Activated naive CD8-positive, alpha-beta T cell treated with anti-CD3 and anti-CD28 coated beads, Interleukin-2, amount 10 ng/mL, durations not matched to agents 7 days and 5 days (primary cell): ENCODE measurements at regions of chr10 and their contacts with region 1.

Region 1: GRCh38 chr10:89391917-89392756 is at the start of gene IFIT1:
- DNase-seq: no peak
- ATAC-seq: peak; percentile 88
- H3K4me3 Mint-ChIP-seq: peak within 1 kb of the TSS; percentile 86
- H3K27ac Mint-ChIP-seq: peak within 1 kb of the TSS; percentile 88
- H3K4me1 Mint-ChIP-seq: peaks cover 35% of the 10 kb centered on the region
- H3K27me3 Mint-ChIP-seq: no peaks in the 10 kb centered on the region
- total RNA-seq, gene IFIT1: 45.7 to 48.4 TPM

Region 2: GRCh38 chr10:89301721-89302445 is 90.3 kb before region 1 on chr10 and contains the start of gene IFIT2:
- POLR2A ChIA-PET with region 1: interaction called, 31 read pairs
- DNase-seq: peak; percentile 40
- ATAC-seq: peak; percentile 75
- H3K4me3 Mint-ChIP-seq: peak within 1 kb of the TSS; percentile 95
- H3K27ac Mint-ChIP-seq: peak within 1 kb of the TSS; percentile 94
- H3K4me1 Mint-ChIP-seq: peaks cover 33% of the 10 kb centered on the region
- H3K27me3 Mint-ChIP-seq: no peaks in the 10 kb centered on the region
- total RNA-seq, gene IFIT2: 18.5 to 21.6 TPM

Region 3: GRCh38 chr10:89440245-89441009 is 48.3 kb after region 1 on chr10:
- POLR2A ChIA-PET with region 1: no interaction called
- DNase-seq: no peak
- ATAC-seq: no peak
- H3K4me3 Mint-ChIP-seq: no peak overlapping the region
- H3K27ac Mint-ChIP-seq: no peak overlapping the region
- H3K4me1 Mint-ChIP-seq: no peaks in the 10 kb centered on the region
- H3K27me3 Mint-ChIP-seq: peaks cover 14% of the 10 kb centered on the region

Region 4: GRCh38 chr10:89589101-89589720 is 197.1 kb after region 1 on chr10:
- POLR2A ChIA-PET with region 1: no interaction called
- DNase-seq: no peak
- ATAC-seq: no peak
- H3K4me3 Mint-ChIP-seq: no peak overlapping the region
- H3K27ac Mint-ChIP-seq: no peak overlapping the region
- H3K4me1 Mint-ChIP-seq: peaks cover 3% of the 10 kb centered on the region
- H3K27me3 Mint-ChIP-seq: no peaks in the 10 kb centered on the region